ENCODE measurements at regions of chr10 and their contacts with region 1.

Region 1: GRCh38 chr10:123967396-123968243 is 76.0 kb upstream of the CPXM2 start:
- DNase-seq: no peak
- H3K4me3 ChIP-seq: no peak overlapping the region
- H3K27ac ChIP-seq: no peak overlapping the region
- H3K4me1 ChIP-seq: peaks cover 15% of the 10 kb centered on the region
- H3K27me3 ChIP-seq: no peaks in the 10 kb centered on the region
- CTCF ChIP-seq: peak; percentile 72 to 89 (median 83)
- POLR2A ChIP-seq: no peak

Region 2: DNA sequence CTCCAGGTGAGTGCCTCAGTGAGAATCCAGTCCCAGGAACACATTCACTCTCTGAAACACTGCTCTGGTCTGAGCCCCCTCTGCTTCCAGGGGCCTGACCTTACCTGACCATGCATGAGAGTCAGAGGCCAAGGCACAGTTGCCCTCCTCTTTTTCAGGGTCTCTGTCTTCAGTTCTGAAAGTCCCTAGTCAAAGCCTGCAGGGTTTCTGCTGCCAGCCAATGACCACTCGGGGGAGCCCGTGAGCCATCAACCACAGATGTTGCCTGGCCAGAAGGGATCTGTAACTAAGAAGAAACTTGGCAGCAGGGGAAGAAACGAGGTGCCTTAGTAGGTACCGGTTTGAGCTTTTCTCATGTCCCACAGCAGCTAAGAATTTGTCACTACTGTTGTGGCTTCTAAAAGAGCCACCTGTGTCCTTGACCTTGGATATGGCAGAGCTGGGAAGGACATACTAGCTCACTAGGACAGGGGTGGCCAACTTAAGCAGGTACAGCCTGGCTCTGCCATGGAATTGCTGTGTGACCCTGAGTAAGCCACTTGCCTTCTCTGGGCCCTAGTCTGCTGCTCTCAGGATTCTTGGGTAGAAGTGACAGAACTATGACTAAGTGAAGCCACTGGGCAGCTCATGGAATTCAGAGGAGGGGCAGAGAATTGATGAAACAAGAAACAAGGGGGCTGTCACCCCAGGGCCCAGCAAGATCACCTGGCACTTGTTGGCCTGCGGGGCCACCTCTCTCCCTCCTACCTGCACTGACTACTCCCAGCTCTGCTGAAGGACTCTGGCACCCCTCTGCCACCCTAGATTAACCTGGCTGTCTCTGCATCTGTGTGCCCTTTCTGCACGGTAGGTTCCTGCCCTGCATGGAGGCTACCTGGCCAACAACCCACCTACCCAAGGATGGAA is 385.3 kb before region 1 on chr10:
- intact Hi-C with region 1: loop called (anchors 2 kb)
- DNase-seq: peak; percentile 84 to 94
- H3K4me3 ChIP-seq: no peak overlapping the region
- H3K27ac ChIP-seq: no peak overlapping the region
- H3K4me1 ChIP-seq: peaks cover 12% of the 10 kb centered on the region
- H3K27me3 ChIP-seq: no peaks in the 10 kb centered on the region
- CTCF ChIP-seq: peak; percentile 45 to 72 (median 47)
- POLR2A ChIP-seq: no peak

Region 3: DNA sequence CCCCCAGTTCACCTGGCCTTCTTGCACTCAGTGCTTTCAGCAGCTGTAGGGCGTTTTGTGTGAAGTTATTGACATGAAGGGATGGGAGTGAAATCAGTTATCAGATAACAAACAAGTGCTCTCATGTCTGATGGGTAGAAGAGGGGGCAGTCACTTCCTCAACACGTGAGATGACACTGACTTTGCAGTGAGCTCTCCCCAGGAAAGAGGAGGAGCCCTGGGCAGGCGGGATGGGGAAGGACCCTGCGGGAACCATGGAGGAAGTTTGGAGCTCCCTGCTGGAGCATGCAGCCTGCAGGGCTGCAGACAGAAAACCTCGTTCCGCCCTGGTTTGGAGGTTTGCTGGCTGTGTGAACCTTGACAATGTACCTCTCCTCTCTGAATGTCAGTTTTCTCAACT is 262.8 kb before region 1 on chr10:
- intact Hi-C with region 1: no loop called
- DNase-seq: no peak
- H3K4me3 ChIP-seq: no peak overlapping the region
- H3K27ac ChIP-seq: no peak overlapping the region
- H3K4me1 ChIP-seq: no peaks in the 10 kb centered on the region
- H3K27me3 ChIP-seq: no peaks in the 10 kb centered on the region
- CTCF ChIP-seq: no peak
- POLR2A ChIP-seq: no peak

Region 4: GRCh38 chr10:123885406-123886170 is 82.0 kb before region 1 on chr10:
- intact Hi-C with region 1: loop called (anchors 10 kb)
- DNase-seq: no peak
- H3K4me3 ChIP-seq: no peak overlapping the region
- H3K27ac ChIP-seq: no peak overlapping the region
- H3K4me1 ChIP-seq: peaks cover 28% of the 10 kb centered on the region
- H3K27me3 ChIP-seq: no peaks in the 10 kb centered on the region
- CTCF ChIP-seq: no peak
- POLR2A ChIP-seq: no peak